CD8-positive, alpha-beta T cell (primary cell): ENCODE measurements at regions of chr9 and their contacts with region 1.

Region 1: GRCh38 chr9:4762108-4762885 is 21.3 kb upstream of the AK3 start:
- DNase-seq: peak; percentile 61 to 87 (median 80)
- ATAC-seq: peak; percentile 80
- H3K4me3 ChIP-seq: no peak overlapping the region
- H3K4me3 Mint-ChIP-seq: peak overlapping the region; percentile 47
- H3K27ac ChIP-seq: no peak overlapping the region
- H3K27ac Mint-ChIP-seq: no peak overlapping the region
- H3K4me1 ChIP-seq: no peaks in the 10 kb centered on the region
- H3K4me1 Mint-ChIP-seq: peaks cover 10% of the 10 kb centered on the region
- H3K27me3 ChIP-seq: peaks cover 0 to 6% of the 10 kb centered on the region in 2 experiments
- H3K27me3 Mint-ChIP-seq: peaks cover 9% of the 10 kb centered on the region
- CTCF ChIP-seq: peak; percentile 87

Region 2: GRCh38 chr9:4740638-4741364 is 21.5 kb before region 1 on chr9 and contains the start of gene AK3:
- CTCF ChIA-PET with region 1: interaction called, 11 read pairs
- POLR2A ChIA-PET with region 1: no interaction called
- intact Hi-C with region 1: no loop called
- DNase-seq: peak; percentile 71 to 94 (median 86)
- ATAC-seq: peak; percentile 93
- H3K4me3 ChIP-seq: peak within 1 kb of the TSS; percentile 76 to 97
- H3K4me3 Mint-ChIP-seq: peak within 1 kb of the TSS; percentile 87
- H3K27ac ChIP-seq: peak within 1 kb of the TSS; percentile 70 to 86
- H3K27ac Mint-ChIP-seq: peak within 1 kb of the TSS; percentile 96
- H3K4me1 ChIP-seq: peaks cover 30% of the 10 kb centered on the region
- H3K4me1 Mint-ChIP-seq: peaks cover 37% of the 10 kb centered on the region
- H3K27me3 ChIP-seq: no peaks in the 10 kb centered on the region
- H3K27me3 Mint-ChIP-seq: no peaks in the 10 kb centered on the region
- CTCF ChIP-seq: no peak
- total RNA-seq, gene AK3: 15.2 to 18.8 TPM

Region 3: GRCh38 chr9:4774209-4774608 is 11.9 kb after region 1 on chr9:
- CTCF ChIA-PET with region 1: interaction called, 16 read pairs
- POLR2A ChIA-PET with region 1: no interaction called
- intact Hi-C with region 1: no loop called
- DNase-seq: no peak
- ATAC-seq: no peak
- H3K4me3 ChIP-seq: no peak overlapping the region
- H3K4me3 Mint-ChIP-seq: no peak overlapping the region
- H3K27ac ChIP-seq: no peak overlapping the region
- H3K27ac Mint-ChIP-seq: no peak overlapping the region
- H3K4me1 ChIP-seq: no peaks in the 10 kb centered on the region
- H3K4me1 Mint-ChIP-seq: no peaks in the 10 kb centered on the region
- H3K27me3 ChIP-seq: no peaks in the 10 kb centered on the region
- H3K27me3 Mint-ChIP-seq: peaks cover 2% of the 10 kb centered on the region
- CTCF ChIP-seq: no peak

Region 4: GRCh38 chr9:4842734-4843133 is 80.4 kb after region 1 on chr9:
- CTCF ChIA-PET with region 1: interaction called, 4 read pairs
- POLR2A ChIA-PET with region 1: interaction called, 3 read pairs
- intact Hi-C with region 1: loop called in 1 of 2 experiments (anchors 5 kb)
- DNase-seq: no peak
- ATAC-seq: no peak
- H3K4me3 ChIP-seq: no peak overlapping the region
- H3K4me3 Mint-ChIP-seq: no peak overlapping the region
- H3K27ac ChIP-seq: no peak overlapping the region
- H3K27ac Mint-ChIP-seq: no peak overlapping the region
- H3K4me1 ChIP-seq: no peaks in the 10 kb centered on the region
- H3K4me1 Mint-ChIP-seq: peaks cover 1% of the 10 kb centered on the region
- H3K27me3 ChIP-seq: no peaks in the 10 kb centered on the region
- H3K27me3 Mint-ChIP-seq: no peaks in the 10 kb centered on the region
- CTCF ChIP-seq: no peak

Region 5: DNA sequence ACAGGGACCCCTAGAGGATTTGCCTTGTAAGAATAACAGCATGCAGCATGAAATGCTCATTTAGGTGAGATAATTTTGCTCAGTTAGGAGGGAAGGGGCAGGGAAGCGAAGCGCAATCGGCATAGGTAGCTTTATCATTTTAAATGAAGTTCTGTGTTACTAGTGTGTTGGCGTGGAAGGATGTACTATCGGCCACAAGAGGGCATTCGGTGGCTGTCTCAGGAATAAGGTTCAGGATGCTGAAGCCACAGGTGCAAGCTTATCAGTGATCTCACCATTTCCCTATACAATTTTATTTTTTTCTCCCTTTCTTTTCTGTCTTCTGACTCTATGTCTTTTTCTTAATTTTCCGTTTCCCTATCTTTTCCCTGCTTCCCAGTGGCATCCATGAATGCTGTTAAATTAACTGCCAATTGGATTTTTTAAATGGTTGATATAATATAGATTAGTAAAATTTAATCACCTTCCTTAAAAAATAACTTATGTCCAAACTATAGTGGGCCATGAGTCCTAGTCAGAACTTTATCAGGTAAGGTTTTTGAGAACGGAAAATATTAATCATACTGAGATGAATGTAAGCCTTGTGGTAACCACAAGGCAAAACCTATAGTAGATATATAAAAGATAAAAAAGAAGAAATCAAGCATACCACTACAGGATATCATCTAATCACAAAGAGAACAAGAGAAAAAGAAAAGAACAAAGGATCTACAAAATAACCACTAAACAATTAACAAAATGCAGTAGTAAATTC is 424.3 kb after region 1 on chr9:
- CTCF ChIA-PET with region 1: interaction called, 5 read pairs
- POLR2A ChIA-PET with region 1: no interaction called
- intact Hi-C with region 1: loop called (anchors 1 to 10 kb)
- DNase-seq: peak; percentile 31 to 84 (median 61)
- ATAC-seq: peak; percentile 94
- H3K4me3 ChIP-seq: no peak overlapping the region
- H3K4me3 Mint-ChIP-seq: no peak overlapping the region
- H3K27ac ChIP-seq: no peak overlapping the region
- H3K27ac Mint-ChIP-seq: no peak overlapping the region
- H3K4me1 ChIP-seq: no peaks in the 10 kb centered on the region
- H3K4me1 Mint-ChIP-seq: peaks cover 6% of the 10 kb centered on the region
- H3K27me3 ChIP-seq: no peaks in the 10 kb centered on the region
- H3K27me3 Mint-ChIP-seq: no peaks in the 10 kb centered on the region
- CTCF ChIP-seq: peak; percentile 76